Vagina (tissue), 2 donors: ENCODE measurements at regions of chr10 and their contacts with region 1.

Region 1: DNA sequence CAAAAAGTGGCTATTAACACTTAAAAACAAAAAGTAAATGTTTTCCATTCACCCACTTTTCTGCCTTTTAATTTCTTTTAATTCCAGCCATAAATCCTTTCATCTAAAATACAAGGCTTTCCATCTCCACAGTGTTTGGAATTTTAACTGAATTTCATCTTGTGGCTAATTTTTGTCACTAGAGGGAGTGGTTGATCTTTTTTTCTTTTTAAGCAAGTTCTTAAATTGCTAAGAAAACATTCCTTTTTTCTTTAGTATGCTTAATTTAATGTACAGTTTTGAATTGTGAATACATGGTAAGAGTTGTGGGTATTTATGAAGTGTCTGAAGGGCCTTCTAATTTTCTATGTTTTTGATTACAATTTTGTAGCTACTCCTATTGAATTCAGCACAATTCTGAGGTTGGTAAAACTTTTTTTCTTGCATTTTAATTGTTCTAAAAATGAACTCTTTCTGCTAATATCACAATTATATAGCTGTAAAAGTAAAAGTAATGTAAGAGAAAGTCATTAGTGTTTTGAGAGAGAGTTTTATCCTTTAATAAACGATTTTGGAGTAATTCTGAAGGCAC is 54.9 kb upstream of the ANK3 start:
- DNase-seq: no peak
- H3K4me3 ChIP-seq: no peak overlapping the region
- H3K27ac ChIP-seq: no peak overlapping the region
- H3K4me1 ChIP-seq: peaks cover 20% of the 10 kb centered on the region
- H3K27me3 ChIP-seq: no peaks in the 10 kb centered on the region
- CTCF ChIP-seq: peak in 2 of 3 experiments; percentile 29 to 38
- POLR2A ChIP-seq: no peak

Region 2: GRCh38 chr10:59585046-59585700 is 859.4 kb before region 1 on chr10:
- intact Hi-C with region 1: no loop called
- DNase-seq: no peak
- H3K4me3 ChIP-seq: no peak overlapping the region
- H3K27ac ChIP-seq: peak overlapping the region; percentile 64
- H3K4me1 ChIP-seq: peaks cover 51% of the 10 kb centered on the region
- H3K27me3 ChIP-seq: no peaks in the 10 kb centered on the region
- CTCF ChIP-seq: no peak
- POLR2A ChIP-seq: no peak

Region 3: DNA sequence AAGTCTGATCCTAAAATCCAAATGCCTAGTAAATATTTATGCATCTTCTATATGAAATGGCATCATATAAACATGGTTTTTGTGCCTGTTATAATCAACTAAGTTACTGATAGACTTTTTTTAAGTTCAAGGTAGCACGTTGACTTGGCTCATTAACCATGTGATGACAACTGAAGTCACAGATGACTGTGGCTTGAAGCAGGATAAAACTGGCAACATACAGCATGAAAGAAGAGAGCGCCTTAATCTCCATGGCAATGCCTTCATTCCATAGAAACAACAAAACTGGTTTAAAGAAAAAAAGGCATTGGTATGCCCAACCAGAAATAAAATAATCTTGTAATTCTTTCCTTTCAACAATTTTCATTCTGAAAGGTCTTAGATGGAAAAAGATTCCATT is 144.8 kb after region 1 on chr10:
- intact Hi-C with region 1: no loop called
- DNase-seq: no peak
- H3K4me3 ChIP-seq: no peak overlapping the region
- H3K27ac ChIP-seq: no peak overlapping the region
- H3K4me1 ChIP-seq: no peaks in the 10 kb centered on the region
- H3K27me3 ChIP-seq: no peaks in the 10 kb centered on the region
- CTCF ChIP-seq: no peak
- POLR2A ChIP-seq: no peak

Region 4: GRCh38 chr10:60646966-60647796 is 202.6 kb after region 1 on chr10:
- intact Hi-C with region 1: loop called (anchors 10 kb)
- DNase-seq: no peak
- H3K4me3 ChIP-seq: no peak overlapping the region
- H3K27ac ChIP-seq: no peak overlapping the region
- H3K4me1 ChIP-seq: peaks cover 9% of the 10 kb centered on the region
- H3K27me3 ChIP-seq: no peaks in the 10 kb centered on the region
- CTCF ChIP-seq: peak; percentile 61 to 77 (median 66)
- POLR2A ChIP-seq: no peak